HepG2 (cell line): ENCODE measurements at regions of chr6 and their contacts with region 1.

Region 1: DNA sequence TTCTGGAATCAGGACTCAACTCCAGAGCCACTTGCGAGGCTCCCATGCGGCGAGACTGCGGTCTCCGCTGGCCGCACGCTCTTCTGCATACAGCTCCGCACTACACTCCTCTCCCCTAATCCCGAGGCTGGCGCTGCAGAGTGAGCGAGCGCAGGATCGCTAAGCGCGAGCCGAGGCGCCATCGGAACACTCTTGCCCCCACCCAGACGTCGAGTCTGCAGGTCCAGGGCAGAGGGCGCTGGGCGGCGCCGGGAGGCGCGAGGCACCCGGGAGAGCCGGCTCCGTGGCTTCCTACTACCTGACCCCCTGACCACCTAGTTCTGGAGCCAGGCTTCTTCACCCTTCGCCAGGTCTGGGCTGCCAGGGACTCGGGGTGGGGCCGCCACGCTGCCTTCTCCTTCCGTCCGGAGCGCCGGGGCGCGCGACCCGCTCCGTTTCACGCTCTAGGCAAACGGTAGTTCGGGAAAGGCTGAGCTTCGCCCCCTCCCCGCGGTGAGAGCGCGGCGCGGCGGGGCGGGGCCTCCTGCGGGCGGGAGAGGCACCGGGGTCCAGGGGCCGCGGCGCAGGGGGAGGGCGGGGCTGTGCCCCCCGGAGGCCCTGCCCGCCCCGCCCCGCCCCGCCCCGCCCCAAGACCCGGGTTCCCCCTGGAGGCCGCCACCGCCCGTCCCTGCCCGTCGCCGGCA is 5.4 kb upstream of the TUBB2A start:
- DNase-seq: peak; percentile 80
- ATAC-seq: peak; percentile 91
- H3K4me3 ChIP-seq: peak overlapping the region; percentile 67 to 84 (median 72)
- H3K27ac ChIP-seq: peak overlapping the region; percentile 89
- H3K4me1 ChIP-seq: peaks cover 71% of the 10 kb centered on the region
- H3K27me3 ChIP-seq: no peaks in the 10 kb centered on the region
- CTCF ChIP-seq: peak; percentile 58
- EP300 ChIP-seq: no peak; a peak in 1 of 4 replicates
- POLR2A ChIP-seq: peak; percentile 66 to 91
- RAD21 ChIP-seq: peak; percentile 81

Region 2: DNA sequence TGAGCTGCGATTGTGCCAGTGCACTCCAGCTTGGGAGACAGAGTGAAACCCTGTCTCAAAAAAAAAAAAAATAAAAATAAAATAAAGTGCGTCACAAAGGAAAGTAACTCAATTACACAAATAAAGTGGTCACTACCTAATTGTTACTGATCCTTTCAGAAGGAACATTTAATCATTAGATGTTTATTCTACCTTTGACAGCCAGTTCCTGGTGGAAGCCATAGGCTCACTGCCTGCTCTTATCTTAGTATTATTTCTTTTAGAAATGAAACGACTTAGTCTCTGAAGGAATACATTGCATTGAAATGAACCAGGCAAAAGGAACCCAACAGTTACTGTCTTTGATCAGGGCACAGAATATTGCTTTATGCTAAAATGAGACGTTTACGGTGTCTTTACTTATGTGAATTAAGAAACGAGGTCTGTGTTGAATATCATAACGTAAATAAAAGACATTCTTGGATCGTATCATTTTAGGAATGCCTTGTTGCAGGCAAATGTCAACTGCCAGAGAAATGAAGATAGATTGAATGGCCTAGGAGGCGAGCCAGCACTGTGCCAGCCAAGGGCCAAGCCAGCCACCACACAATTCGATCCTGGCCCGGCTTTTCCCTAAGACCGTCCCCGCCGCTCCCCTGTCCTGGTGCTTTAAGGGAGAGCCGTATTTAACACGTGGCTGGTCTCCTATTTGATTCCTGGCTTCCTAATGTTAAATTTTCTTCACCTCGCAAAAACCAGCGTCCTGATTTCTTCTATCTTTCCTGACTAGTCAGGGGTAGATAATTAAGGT is 780.6 kb before region 1 on chr6:
- CTCF ChIA-PET with region 1: no interaction called
- POLR2A ChIA-PET with region 1: no interaction called
- in situ Hi-C with region 1: no loop called
- intact Hi-C with region 1: no loop called
- DNase-seq: no peak
- ATAC-seq: no peak
- H3K4me3 ChIP-seq: no peak overlapping the region
- H3K27ac ChIP-seq: no peak overlapping the region
- H3K4me1 ChIP-seq: no peaks in the 10 kb centered on the region
- H3K27me3 ChIP-seq: no peaks in the 10 kb centered on the region
- CTCF ChIP-seq: no peak
- EP300 ChIP-seq: no peak
- POLR2A ChIP-seq: no peak
- RAD21 ChIP-seq: no peak

Region 3: DNA sequence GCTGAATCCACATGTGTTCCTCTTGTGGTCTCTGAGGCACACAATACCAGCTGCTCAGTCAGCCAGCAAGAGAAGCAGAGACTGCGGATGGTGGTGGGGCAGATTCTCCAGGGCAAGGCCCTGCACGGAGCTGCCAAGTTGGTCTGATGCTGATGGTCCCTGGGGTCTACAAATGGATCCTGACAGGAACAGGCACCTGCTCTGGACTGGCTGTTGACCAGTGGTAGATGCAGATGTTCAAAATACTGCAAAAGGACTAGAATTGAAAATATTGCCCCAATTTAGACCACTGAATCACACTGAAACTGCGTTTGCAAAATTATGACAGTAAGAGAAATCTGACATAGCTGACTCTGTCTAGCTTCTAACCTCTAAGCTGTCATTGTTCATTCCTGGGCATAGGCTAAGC is 24.3 kb after region 1 on chr6:
- CTCF ChIA-PET with region 1: no interaction called
- POLR2A ChIA-PET with region 1: no interaction called
- in situ Hi-C with region 1: no loop called
- intact Hi-C with region 1: no loop called
- DNase-seq: no peak
- ATAC-seq: no peak; the same call in 2 of the 3 replicates
- H3K4me3 ChIP-seq: no peak overlapping the region
- H3K27ac ChIP-seq: no peak overlapping the region
- H3K4me1 ChIP-seq: no peaks in the 10 kb centered on the region
- H3K27me3 ChIP-seq: peaks cover 0 to 7% of the 10 kb centered on the region in 2 experiments; a peak in 2 of 5 replicates
- CTCF ChIP-seq: no peak
- EP300 ChIP-seq: no peak
- POLR2A ChIP-seq: no peak
- RAD21 ChIP-seq: no peak

Region 4: GRCh38 chr6:3209114-3210023 is 46.7 kb after region 1 on chr6:
- CTCF ChIA-PET with region 1: no interaction called
- POLR2A ChIA-PET with region 1: interaction called, 8 read pairs
- in situ Hi-C with region 1: no loop called
- intact Hi-C with region 1: loop called (anchors 2 kb)
- DNase-seq: peak; percentile 88
- ATAC-seq: peak; percentile 90
- H3K4me3 ChIP-seq: peak overlapping the region in 2 of 3 experiments; percentile 3 to 35; a peak in 4 of 6 replicates
- H3K27ac ChIP-seq: no peak overlapping the region
- H3K4me1 ChIP-seq: peaks cover 23% of the 10 kb centered on the region
- H3K27me3 ChIP-seq: peaks cover 9 to 65% of the 10 kb centered on the region in 2 experiments; a peak in 4 of 5 replicates
- CTCF ChIP-seq: peak; percentile 71
- EP300 ChIP-seq: peak in 1 of 2 experiments; percentile 9; a peak in 1 of 4 replicates
- POLR2A ChIP-seq: no peak
- RAD21 ChIP-seq: 0 out of 2 replicates have a peak, but pooled peaks have one; percentile 20